Gastrocnemius medialis (tissue), 4 donors: ENCODE measurements at regions of chr11 and their contacts with region 1.

Region 1: GRCh38 chr11:11813288-11813962 is 28.3 kb upstream of the USP47 start:
- DNase-seq: peak; percentile 20 to 57
- ATAC-seq: peak; percentile 95 to 99
- H3K4me3 ChIP-seq: no peak overlapping the region
- H3K27ac ChIP-seq: peak overlapping the region; percentile 4 to 57 (median 34)
- H3K4me1 ChIP-seq: peaks cover 6 to 12% of the 10 kb centered on the region in 2 donors
- H3K27me3 ChIP-seq: no peaks in the 10 kb centered on the region
- CTCF ChIP-seq: no peak
- POLR2A ChIP-seq: no peak

Region 2: DNA sequence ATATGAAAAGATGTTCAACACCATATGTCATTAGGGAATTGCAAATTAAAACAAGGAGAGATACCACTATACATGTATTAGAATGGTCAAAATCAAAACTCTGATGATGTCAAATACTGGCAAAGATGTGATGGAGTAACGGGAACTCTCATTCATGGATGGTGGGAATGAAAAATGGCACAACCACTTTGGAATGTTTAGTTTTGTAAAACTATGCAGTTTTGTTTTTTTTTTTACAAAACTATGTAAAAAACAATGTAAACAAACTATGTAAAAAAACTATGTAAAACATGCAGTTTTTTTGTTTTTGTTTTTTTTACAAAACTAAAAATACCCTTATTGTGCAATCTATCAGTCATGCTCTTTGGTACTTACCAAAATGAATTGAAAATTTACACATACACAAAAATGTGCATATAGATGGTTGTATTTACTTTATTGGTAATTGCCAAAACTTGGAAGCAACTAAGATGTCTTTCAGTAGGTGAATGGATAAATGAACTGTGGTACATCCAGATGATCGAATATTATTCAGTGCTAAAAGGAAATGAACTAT is 23.3 kb after region 1 on chr11:
- in situ Hi-C with region 1: no loop called
- intact Hi-C with region 1: no loop called
- DNase-seq: no peak
- ATAC-seq: no peak
- H3K4me3 ChIP-seq: no peak overlapping the region
- H3K27ac ChIP-seq: no peak overlapping the region
- H3K4me1 ChIP-seq: peaks cover 4% of the 10 kb centered on the region in 2 donors
- H3K27me3 ChIP-seq: no peaks in the 10 kb centered on the region
- CTCF ChIP-seq: no peak
- POLR2A ChIP-seq: no peak

Region 3: DNA sequence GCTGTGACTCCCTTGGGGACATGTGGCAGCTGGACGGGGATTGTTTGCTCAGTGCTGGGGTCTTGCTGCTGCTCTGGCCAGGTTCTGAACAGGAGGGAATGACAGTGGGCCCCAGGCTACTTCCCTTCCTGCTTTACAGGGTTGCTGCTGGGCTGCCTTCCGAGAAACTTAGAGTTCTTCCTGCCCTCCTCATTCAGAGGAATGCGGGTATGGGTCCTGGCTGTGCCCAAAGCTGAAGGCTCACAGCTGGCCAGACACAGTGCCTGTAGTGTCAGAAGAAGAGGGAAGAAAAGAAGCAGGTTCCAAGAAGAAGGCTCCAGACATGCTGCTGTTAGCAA is 455.6 kb after region 1 on chr11:
- in situ Hi-C with region 1: loop called in 2 of 4 experiments (anchors 25 kb)
- intact Hi-C with region 1: no loop called
- DNase-seq: no peak
- ATAC-seq: no peak
- H3K4me3 ChIP-seq: no peak overlapping the region
- H3K27ac ChIP-seq: no peak overlapping the region
- H3K4me1 ChIP-seq: no peaks in the 10 kb centered on the region
- H3K27me3 ChIP-seq: no peaks in the 10 kb centered on the region
- CTCF ChIP-seq: no peak
- POLR2A ChIP-seq: no peak